Activated B cell treated with CpG ODN at 0.5 μM for 24 hours (primary cell): ENCODE measurements at regions of chr10 and their contacts with region 1.

Region 1: DNA sequence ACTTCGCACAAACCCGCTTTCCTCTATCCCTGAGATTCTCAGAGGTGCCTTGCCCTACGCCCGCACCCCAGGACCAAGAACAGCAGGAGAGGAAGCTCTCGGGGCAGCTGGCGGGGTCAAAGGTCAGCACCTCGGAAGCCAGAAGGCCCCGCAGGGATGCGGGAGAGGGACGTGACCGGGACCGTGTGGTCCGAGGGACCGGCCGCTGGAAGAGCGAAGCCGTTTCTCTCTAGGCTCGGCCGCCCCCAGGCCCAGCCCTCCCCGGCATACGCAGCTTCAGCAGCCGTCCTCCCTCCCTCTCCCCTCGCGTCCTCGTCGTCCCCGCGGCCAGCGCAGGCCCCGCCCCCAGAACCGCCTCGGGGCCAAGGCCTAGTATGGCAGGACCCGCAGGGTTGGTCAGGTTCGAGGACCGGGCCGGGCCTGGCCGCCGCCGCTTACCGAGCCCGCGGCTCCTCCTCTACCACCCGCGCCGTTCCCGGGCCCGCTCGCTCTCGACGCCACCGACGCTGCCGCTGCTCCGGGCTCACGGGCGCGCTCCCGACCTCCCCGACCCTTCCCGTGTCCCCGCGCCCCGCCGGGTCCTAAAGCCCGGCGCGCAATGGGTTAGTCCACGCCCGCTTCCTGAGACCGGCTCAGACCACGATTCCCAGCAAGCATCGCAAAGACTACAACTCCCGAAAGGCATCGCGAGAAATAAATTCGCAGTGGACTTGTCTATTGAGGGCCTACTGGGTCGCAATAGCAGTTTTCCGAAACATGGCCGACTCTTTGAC is at the start of gene ARMH3:
- DNase-seq: peak; percentile 83
- ATAC-seq: peak; percentile 93
- H3K4me3 Mint-ChIP-seq: peak within 1 kb of the TSS; percentile 94
- H3K27ac Mint-ChIP-seq: peak within 1 kb of the TSS; percentile 91
- H3K4me1 Mint-ChIP-seq: peaks cover 45% of the 10 kb centered on the region
- H3K27me3 Mint-ChIP-seq: no peaks in the 10 kb centered on the region
- CTCF ChIP-seq: no peak
- total RNA-seq, gene ARMH3: 26.8 and 35.4 TPM in 2 replicates

Region 2: DNA sequence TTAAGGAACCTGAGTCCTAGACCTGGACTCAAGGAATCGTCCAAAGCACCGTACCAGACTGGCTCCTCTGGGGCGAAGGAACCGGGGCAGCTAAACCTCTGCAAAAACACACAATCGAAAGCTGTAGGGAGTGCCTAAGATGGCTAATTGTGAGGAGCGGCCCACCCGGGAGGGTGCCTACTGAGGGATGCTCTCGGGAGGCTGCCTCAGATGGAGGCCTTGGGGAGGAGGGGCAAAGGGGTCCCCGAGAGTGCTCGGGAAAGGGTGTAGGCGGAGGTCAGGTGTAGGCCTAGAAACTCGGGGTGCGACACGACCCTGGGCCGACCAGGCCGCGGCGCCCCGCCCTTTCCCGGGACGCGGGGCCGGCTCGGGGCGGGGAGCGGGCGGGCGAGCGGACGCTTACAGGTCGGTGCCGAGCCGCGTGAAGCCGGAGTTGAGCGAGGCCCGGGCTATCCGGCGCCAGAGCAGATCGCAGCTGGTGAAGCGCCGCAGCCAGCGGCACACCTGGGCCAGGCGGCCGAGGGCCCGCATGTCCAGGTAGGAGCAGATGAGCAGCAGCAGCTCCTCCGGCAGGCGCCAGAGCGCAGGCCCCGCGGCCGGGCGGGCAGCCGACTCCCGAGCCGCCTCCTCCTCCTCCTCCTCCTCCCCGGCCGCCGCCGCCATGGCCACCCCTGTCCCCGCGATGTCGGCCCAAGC is 361.7 kb before region 1 on chr10:
- CTCF ChIA-PET with region 1: no interaction called
- POLR2A ChIA-PET with region 1: no interaction called
- intact Hi-C with region 1: loop called (anchors 10 kb)
- DNase-seq: peak; percentile 76
- ATAC-seq: peak; percentile 68
- H3K4me3 Mint-ChIP-seq: peak overlapping the region; percentile 97
- H3K27ac Mint-ChIP-seq: peak overlapping the region; percentile 98
- H3K4me1 Mint-ChIP-seq: peaks cover 49% of the 10 kb centered on the region
- H3K27me3 Mint-ChIP-seq: no peaks in the 10 kb centered on the region
- CTCF ChIP-seq: no peak

Region 3: DNA sequence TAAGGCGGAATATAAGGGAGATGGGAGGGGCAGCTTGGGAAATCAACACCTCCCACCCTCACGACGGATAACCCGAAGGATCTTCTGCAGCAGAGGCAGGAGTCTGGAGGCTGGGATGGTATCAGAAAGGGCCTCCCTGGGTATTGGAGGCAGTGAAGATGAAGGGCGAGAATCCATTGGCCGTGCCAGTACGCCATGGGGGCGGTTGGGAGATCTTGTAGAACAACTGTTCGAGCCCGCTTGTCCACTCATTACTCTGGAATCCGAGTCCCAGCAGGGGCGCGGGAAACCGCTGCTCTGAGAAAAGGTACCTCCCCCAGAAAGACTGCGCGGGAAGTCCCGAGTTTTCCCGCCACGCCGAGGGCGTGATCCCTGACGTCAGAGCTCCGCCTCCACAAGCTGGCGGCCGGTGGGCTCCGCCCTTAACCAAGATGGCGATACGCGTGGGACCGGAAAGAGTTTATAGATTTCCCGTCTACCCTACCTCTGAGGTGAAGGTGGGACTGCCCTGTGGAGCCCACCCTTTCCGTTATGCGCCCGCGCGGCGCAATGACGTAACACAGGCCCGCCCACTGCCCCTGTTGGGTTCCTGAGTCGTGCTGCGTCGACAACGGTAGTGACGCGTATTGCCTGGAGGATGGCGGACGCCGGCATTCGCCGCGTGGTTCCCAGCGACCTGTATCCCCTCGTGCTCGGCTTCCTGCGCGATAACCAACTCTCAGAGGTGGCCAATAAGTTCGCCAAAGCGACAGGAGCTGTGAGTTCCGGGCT is 96.1 kb after region 1 on chr10 and contains the start of gene NOLC1:
- CTCF ChIA-PET with region 1: no interaction called
- POLR2A ChIA-PET with region 1: interaction called, 4 read pairs
- intact Hi-C with region 1: loop called (anchors 1 kb)
- DNase-seq: peak; percentile 99
- ATAC-seq: peak; percentile 96
- H3K4me3 Mint-ChIP-seq: peak within 1 kb of the TSS; percentile 97
- H3K27ac Mint-ChIP-seq: peak within 1 kb of the TSS; percentile 93
- H3K4me1 Mint-ChIP-seq: peaks cover 35% of the 10 kb centered on the region
- H3K27me3 Mint-ChIP-seq: no peaks in the 10 kb centered on the region
- CTCF ChIP-seq: no peak
- total RNA-seq, gene NOLC1: 95.1 and 106 TPM in 2 replicates